AG04450 (cell line): ENCODE measurements at regions of chr5 and their contacts with region 1.

Region 1: DNA sequence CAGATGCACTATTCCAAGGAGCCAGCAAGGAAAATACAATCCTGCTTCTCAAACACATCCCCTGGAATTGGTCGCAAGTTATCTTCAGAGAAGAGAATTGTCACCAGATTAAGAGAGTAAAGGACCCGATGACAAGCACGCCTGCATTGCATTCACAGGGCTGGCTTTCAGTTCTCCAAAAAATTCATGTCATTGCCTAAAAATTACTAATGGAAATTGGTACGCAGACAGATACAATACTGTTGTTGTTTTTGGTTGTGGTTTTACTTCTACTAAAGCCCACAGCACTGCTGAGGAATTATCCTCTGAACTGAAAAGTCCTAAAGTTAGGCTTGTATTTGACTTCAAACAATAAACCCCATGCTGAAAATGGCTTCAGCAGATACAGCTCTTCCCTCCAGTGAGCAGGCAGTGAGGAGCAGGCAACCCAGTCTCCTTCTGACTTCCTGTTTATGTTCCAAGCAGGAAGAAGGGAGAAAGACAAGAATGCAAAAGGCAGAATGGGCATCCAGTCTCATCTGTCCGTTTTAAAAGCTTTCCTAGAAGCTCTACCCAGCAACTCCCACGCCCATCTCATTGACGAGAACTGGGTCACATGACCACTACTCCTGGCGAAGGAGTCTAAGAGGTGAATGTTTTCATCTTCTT is 80.6 kb upstream of the ZNF366 start:
- DNase-seq: no peak
- H3K4me3 ChIP-seq: no peak overlapping the region
- H3K27ac ChIP-seq: no peak overlapping the region
- H3K27me3 ChIP-seq: no peaks in the 10 kb centered on the region
- CTCF ChIP-seq: no peak

Region 2: GRCh38 chr5:72523960-72524582 is 63.7 kb before region 1 on chr5:
- CTCF ChIA-PET with region 1: interaction called, 10 read pairs
- POLR2A ChIA-PET with region 1: no interaction called
- DNase-seq: peak; percentile 52
- H3K4me3 ChIP-seq: no peak overlapping the region
- H3K27ac ChIP-seq: no peak overlapping the region
- H3K27me3 ChIP-seq: no peaks in the 10 kb centered on the region
- CTCF ChIP-seq: peak; percentile 65

Region 3: GRCh38 chr5:72604111-72604797 is 16.5 kb after region 1 on chr5:
- CTCF ChIA-PET with region 1: no interaction called
- POLR2A ChIA-PET with region 1: no interaction called
- DNase-seq: no peak
- H3K4me3 ChIP-seq: no peak overlapping the region
- H3K27ac ChIP-seq: no peak overlapping the region
- H3K27me3 ChIP-seq: no peaks in the 10 kb centered on the region
- CTCF ChIP-seq: no peak